HEK293T (cell line): ENCODE measurements at regions of chr6 and their contacts with region 1.

Region 1: DNA sequence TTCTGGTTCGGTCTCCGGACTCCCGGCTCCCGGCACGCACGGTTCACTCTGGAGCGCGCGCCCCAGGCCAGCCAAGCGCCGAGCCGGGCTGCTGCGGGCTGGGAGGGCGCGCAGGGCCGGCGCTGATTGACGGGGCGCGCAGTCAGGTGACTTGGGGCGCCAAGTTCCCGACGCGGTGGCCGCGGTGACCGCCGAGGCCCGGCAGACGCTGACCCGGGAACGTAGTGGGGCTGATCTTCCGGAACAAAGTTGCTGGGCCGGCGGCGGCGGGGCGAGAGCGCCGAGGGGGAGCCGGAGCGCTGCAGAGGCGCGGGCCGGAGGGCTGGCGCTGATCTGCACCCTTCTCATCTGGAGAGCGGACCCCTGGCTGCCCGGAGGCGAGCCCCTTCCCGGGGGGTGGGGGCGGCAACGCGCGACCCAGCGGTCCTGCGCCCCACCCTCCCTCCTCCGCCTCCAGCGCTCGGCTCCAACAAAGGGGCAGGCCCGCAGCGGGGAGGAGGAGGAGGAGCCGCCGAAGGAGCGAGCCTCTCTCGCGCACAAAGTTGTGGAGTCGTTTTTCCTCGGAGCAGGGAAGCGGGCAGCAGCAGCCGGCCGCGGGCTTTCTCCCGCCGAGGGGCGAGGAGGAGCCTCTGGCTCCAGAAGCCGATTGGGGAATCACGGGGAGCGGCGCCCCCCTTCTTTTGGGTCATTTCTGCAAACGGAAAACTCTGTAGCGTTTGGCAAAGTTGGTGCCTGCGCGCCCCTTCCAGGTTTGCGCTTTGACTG is at the start of gene UTRN:
- DNase-seq: peak; percentile 82

Region 2: GRCh38 chr6:144265390-144265789 is 19.6 kb before region 1 on chr6:
- CTCF ChIA-PET with region 1: no interaction called
- POLR2A ChIA-PET with region 1: interaction called, 23 read pairs
- DNase-seq: peak; percentile 22